ENCODE measurements at regions of chr1 and their contacts with region 1.

Region 1: GRCh38 chr1:205354259-205354904 is 2.3 kb downstream of the KLHDC8A start:
- DNase-seq: peak in 34 of 35 experiments; percentile 12 to 83 (median 55)
- ATAC-seq: peak in 3 of 4 experiments; percentile 69 to 72 (median 69)
- H3K4me3 ChIP-seq: no peak overlapping the region
- H3K4me3 Mint-ChIP-seq: no peak overlapping the region
- H3K27ac ChIP-seq: no peak overlapping the region
- H3K27ac Mint-ChIP-seq: no peak overlapping the region
- H3K4me1 ChIP-seq: no peaks in the 10 kb centered on the region
- H3K4me1 Mint-ChIP-seq: peaks cover 0 to 2% (median 0%) of the 10 kb centered on the region in 3 donors
- H3K27me3 ChIP-seq: peaks cover 0 to 30% of the 10 kb centered on the region in 2 experiments
- H3K27me3 Mint-ChIP-seq: peaks cover 11 to 26% of the 10 kb centered on the region in 2 donors

Region 2: GRCh38 chr1:205335643-205336091 is 18.7 kb before region 1 on chr1:
- CTCF ChIA-PET with region 1: interaction called, 4 to 12 read pairs
- POLR2A ChIA-PET with region 1: no interaction called
- DNase-seq: peak; percentile 36 to 85 (median 69)
- ATAC-seq: peak; percentile 86 to 98 (median 94)
- H3K4me3 ChIP-seq: no peak overlapping the region
- H3K4me3 Mint-ChIP-seq: no peak overlapping the region
- H3K27ac ChIP-seq: no peak overlapping the region
- H3K27ac Mint-ChIP-seq: no peak overlapping the region
- H3K4me1 ChIP-seq: peaks cover 0 to 3% of the 10 kb centered on the region in 2 experiments
- H3K4me1 Mint-ChIP-seq: peaks cover 0 to 2% (median 0%) of the 10 kb centered on the region in 3 donors
- H3K27me3 ChIP-seq: peaks cover 0 to 8% of the 10 kb centered on the region in 2 experiments
- H3K27me3 Mint-ChIP-seq: peaks cover 2 to 3% of the 10 kb centered on the region in 2 donors

Region 3: GRCh38 chr1:205396967-205397616 is 42.7 kb after region 1 on chr1:
- CTCF ChIA-PET with region 1: interaction called, 3 to 10 read pairs
- POLR2A ChIA-PET with region 1: no interaction called
- DNase-seq: peak in 13 of 35 experiments; percentile 1 to 66 (median 10)
- ATAC-seq: peak in 2 of 4 experiments; percentile 45 to 55
- H3K4me3 ChIP-seq: no peak overlapping the region
- H3K4me3 Mint-ChIP-seq: no peak overlapping the region
- H3K27ac ChIP-seq: no peak overlapping the region
- H3K27ac Mint-ChIP-seq: no peak overlapping the region
- H3K4me1 ChIP-seq: no peaks in the 10 kb centered on the region
- H3K4me1 Mint-ChIP-seq: peaks cover 0 to 5% (median 5%) of the 10 kb centered on the region in 3 donors
- H3K27me3 ChIP-seq: peaks cover 5 to 7% of the 10 kb centered on the region in 2 experiments
- H3K27me3 Mint-ChIP-seq: peaks cover 5 to 19% of the 10 kb centered on the region in 2 donors

Region 4: GRCh38 chr1:205466595-205467181 is 112.3 kb after region 1 on chr1:
- CTCF ChIA-PET with region 1: no interaction called
- POLR2A ChIA-PET with region 1: no interaction called
- DNase-seq: no peak
- ATAC-seq: no peak
- H3K4me3 ChIP-seq: no peak overlapping the region
- H3K4me3 Mint-ChIP-seq: no peak overlapping the region
- H3K27ac ChIP-seq: no peak overlapping the region
- H3K27ac Mint-ChIP-seq: no peak overlapping the region
- H3K4me1 ChIP-seq: no peaks in the 10 kb centered on the region
- H3K4me1 Mint-ChIP-seq: no peaks in the 10 kb centered on the region
- H3K27me3 ChIP-seq: peaks cover 0 to 15% of the 10 kb centered on the region in 2 experiments
- H3K27me3 Mint-ChIP-seq: peaks cover 22 to 24% of the 10 kb centered on the region in 2 donors

Region 5: DNA sequence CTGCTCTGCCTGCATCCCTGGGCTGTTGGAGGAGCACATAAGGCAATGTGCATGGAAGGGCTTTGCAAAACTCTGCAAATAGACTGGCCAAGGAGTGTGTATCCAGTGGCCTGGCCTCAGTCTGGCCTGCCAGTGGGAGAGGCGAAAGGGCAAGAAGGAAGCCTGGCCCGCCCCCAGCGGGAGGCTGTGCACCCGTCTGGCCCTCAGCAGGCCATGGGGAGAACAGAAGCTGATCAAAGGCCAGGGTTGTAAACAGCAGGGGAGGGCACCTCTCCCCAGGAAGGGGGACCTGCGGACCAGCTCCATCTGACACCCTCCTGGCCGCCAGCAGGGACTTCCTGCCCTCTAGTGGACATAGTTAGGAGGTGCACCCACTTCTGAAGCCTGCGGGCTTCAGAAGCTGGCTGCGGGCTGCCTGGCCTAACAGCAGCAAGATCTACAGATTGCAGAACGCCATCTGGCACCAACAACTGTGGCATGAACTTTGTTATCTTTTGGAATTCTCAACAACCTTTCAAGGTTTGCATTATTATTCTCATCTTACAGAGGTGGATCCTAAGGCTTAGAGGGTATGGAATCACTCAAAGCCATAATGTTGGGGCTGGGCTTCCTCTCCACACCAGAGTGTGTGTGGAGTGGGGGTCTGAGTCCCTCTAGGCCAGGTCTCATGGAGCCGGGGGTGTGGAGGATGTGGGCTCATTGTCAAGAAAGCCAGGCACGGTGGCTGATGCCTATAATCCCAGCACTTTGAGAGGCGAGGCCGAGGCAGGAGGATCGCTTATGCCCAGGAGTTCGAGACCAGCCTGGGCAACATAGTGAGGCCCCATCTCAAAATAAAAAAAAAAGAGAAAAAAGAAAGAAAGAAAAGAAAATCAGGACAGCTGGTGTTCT is 131.2 kb after region 1 on chr1:
- CTCF ChIA-PET with region 1: interaction called, 9 to 37 read pairs
- POLR2A ChIA-PET with region 1: no interaction called
- DNase-seq: peak; percentile 42 to 85 (median 60)
- ATAC-seq: peak; percentile 60 to 81 (median 70)
- H3K4me3 ChIP-seq: no peak overlapping the region
- H3K4me3 Mint-ChIP-seq: no peak overlapping the region
- H3K27ac ChIP-seq: no peak overlapping the region
- H3K27ac Mint-ChIP-seq: no peak overlapping the region
- H3K4me1 ChIP-seq: peaks cover 0 to 31% of the 10 kb centered on the region in 2 experiments
- H3K4me1 Mint-ChIP-seq: peaks cover 21 to 34% (median 29%) of the 10 kb centered on the region in 3 donors
- H3K27me3 ChIP-seq: peaks cover 2 to 52% of the 10 kb centered on the region in 2 experiments
- H3K27me3 Mint-ChIP-seq: peaks cover 40 to 50% of the 10 kb centered on the region in 2 donors

Measured in T-cell (primary cell).